ENCODE measurements at regions of chr17 and their contacts with region 1.

Region 1: GRCh38 chr17:44533533-44534246 is 23.6 kb upstream of the FZD2 start:
- DNase-seq: peak; percentile 87 to 90
- H3K4me3 ChIP-seq: no peak overlapping the region
- H3K27ac ChIP-seq: peak overlapping the region; percentile 57 to 68
- H3K4me1 ChIP-seq: peaks cover 0 to 6% of the 10 kb centered on the region in 2 donors
- H3K27me3 ChIP-seq: no peaks in the 10 kb centered on the region
- CTCF ChIP-seq: peak; percentile 92 to 97 (median 94)
- POLR2A ChIP-seq: no peak

Region 2: DNA sequence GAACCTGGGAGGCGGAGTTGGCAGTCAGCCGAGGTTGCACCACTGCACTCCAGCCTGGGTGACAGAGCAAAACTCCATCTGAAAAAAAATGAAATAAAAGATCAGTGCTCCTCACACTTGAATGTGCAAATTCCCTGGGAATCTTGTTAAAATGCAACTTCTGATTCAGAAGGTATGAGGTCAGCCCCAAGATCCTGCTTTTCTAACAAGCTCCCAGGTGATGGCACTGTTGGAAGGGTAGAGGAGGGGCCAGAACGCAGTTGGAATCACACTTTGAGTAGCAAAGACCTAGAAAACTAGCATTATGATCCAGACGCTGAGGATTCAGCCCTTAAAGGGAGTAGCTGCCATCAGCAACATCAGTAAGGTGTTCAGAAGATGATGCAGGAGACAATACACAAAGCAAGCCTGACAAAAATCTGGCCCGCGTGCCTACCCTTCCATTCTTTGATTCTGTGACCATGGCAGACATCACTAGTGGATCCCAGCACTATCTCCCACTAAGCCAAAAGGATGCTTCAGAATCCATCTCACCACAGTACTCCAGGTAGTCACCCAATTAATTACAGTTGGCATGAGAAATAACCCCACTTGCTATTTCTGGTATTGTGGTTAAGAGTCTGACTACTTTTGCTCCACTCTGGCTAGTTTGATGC is 89.5 kb after region 1 on chr17:
- intact Hi-C with region 1: no loop called
- DNase-seq: no peak
- H3K4me3 ChIP-seq: no peak overlapping the region
- H3K27ac ChIP-seq: no peak overlapping the region
- H3K4me1 ChIP-seq: no peaks in the 10 kb centered on the region
- H3K27me3 ChIP-seq: no peaks in the 10 kb centered on the region
- CTCF ChIP-seq: no peak
- POLR2A ChIP-seq: no peak

Region 3: GRCh38 chr17:44636562-44636961 is 102.9 kb after region 1 on chr17:
- intact Hi-C with region 1: loop called (anchors 5 kb)
- DNase-seq: no peak
- H3K4me3 ChIP-seq: no peak overlapping the region
- H3K27ac ChIP-seq: no peak overlapping the region
- H3K4me1 ChIP-seq: no peaks in the 10 kb centered on the region
- H3K27me3 ChIP-seq: no peaks in the 10 kb centered on the region
- CTCF ChIP-seq: peak; percentile 48 to 82 (median 58)
- POLR2A ChIP-seq: no peak